ENCODE measurements at regions of chr9 and their contacts with region 1.

Region 1: DNA sequence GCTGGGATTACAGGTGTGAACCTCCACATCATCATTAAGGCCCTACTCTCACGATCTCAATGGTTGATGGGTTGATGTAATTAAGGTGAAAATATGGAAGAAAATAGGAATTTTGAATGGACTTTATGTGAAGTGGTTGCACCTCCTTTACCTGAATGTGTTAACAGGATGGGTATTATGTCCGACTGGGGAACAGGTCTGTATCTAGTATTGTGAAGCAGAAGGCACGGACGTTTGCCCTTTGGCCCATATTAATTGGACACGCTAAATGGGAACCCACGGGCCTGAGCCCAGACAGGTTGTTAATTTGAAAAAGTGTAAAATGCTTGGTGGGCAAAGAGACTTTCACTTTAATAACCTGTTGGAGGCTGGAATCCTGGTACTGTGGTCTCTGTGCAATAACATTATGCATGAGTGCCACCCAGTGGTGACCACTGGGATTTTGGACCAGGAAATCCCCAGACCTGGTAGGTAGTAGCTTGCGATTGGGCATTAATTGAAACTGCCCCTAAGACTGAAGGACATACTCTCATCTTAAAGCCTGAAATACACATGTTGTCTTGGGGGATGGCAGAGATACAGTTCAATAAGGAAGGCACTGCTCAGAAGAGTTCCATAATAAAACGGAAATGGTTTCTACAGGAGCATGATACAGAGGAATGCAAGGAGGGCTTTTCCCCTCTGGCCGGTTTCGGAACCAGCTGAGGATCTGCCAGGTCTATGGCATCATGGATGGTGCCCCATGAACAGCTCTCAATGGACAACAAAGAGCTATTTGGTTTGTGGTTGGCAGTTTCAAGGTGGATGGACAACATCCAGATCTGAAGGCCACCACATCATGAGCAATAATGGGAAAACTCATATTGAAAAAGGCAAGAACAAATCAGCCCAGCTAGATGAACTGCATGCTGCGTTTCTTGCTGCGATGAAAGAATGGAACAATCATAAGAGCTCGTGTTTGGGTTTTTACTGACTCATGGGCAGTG is 26.2 kb upstream of the BICD2 start:
- DNase-seq: peak in 4 of 5 donors; percentile 76 to 90 (median 86)
- H3K4me3 ChIP-seq: peak overlapping the region in 2 of 3 donors; percentile 8 to 25
- H3K27ac ChIP-seq: no peak overlapping the region
- H3K4me1 ChIP-seq: no peaks in the 10 kb centered on the region
- H3K27me3 ChIP-seq: no peaks in the 10 kb centered on the region
- CTCF ChIP-seq: peak; percentile 93

Region 2: DNA sequence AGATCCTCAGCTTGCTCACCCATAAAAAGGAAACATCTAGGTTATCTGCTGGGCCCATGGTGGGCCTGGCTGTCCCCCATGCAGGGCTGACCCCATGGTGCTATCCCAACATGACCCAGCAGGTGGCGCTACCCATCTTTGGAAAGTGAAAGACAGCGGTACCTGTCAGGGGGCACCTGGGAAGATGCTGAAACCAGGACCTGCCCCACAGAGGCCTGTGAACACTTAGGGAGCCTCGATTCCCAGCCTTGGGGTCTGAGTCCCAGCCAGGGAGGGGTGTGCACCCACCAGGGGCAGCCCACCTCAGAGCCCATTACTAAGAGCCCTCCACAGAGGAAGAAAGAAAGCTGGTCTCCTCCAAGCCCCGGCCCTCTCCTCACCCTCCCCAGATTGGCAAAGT is 74.3 kb before region 1 on chr9:
- intact Hi-C with region 1: loop called (anchors 5 kb)
- DNase-seq: peak; percentile 60 to 78 (median 75)
- H3K4me3 ChIP-seq: no peak overlapping the region
- H3K27ac ChIP-seq: no peak overlapping the region
- H3K4me1 ChIP-seq: no peaks in the 10 kb centered on the region
- H3K27me3 ChIP-seq: no peaks in the 10 kb centered on the region
- CTCF ChIP-seq: peak; percentile 86

Region 3: DNA sequence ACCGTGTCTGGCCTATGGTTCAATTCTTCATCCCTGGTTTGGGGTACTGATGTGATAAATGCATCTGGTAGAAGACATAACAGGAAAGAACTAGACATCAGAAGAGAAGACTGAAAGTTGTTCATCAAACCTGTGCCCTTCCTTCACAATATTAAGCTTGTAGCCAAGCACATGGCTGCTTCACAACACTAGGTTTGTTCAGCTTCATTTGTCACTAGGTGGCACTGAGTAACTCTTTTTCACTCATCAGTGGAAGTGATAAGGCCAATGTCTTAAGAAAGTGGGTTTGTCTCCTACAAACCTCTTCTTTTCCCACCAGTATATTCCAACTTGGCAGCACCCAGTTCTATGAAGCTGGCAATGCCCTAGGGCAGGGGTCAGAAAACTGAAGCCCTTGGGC is 60.0 kb after region 1 on chr9:
- intact Hi-C with region 1: no loop called
- DNase-seq: no peak
- H3K4me3 ChIP-seq: no peak overlapping the region
- H3K27ac ChIP-seq: no peak overlapping the region
- H3K4me1 ChIP-seq: no peaks in the 10 kb centered on the region
- H3K27me3 ChIP-seq: no peaks in the 10 kb centered on the region
- CTCF ChIP-seq: no peak

Measured in kidney (tissue), 22 donors.